ENCODE measurements at regions of chr12 and their contacts with region 1.

Region 1: DNA sequence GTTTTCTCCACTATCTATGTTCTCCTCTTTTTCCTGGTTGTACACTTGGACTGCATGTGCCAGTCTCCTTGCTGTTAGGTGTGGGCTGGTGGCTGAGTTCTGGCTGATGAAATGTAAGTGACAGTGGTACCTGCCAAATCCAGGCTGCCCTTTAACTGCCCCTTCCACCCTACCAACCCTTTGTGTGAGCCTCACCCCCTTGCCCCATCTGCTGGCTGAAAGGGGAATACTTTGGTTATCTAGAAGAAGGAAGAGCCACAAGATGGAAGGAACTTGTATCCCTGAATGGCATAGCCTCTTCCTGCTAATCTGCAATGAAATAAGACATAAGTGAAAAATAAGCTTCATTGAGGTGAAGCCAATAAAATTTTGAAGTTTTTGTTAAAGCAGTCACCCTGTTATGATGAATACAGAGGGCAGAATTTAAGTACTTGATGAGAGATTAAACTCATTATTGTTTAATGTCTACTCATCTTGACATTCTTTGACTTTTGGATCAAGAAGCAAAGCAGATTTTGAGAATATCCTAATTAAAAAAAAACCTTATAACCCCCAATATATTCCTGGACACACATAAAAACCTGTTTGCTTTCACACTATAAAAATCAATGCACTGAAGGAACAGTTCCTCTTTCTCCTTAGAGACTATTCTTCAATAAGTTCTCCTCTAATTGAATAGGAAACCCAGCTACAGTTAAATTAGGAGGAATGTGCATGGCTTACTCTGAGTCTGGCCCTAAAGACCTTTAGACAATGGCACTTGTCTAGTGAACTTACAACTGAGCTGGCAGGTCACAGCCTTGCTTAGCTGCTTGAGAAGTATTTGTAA is 262.6 kb upstream of the BTG1 start:
- DNase-seq: peak; percentile 38
- CTCF ChIP-seq: peak; percentile 53

Region 2: GRCh38 chr12:92121826-92122225 is 286.5 kb before region 1 on chr12:
- CTCF ChIA-PET with region 1: no interaction called
- POLR2A ChIA-PET with region 1: no interaction called
- DNase-seq: no peak
- CTCF ChIP-seq: no peak

Region 3: GRCh38 chr12:92363295-92364146 is 44.8 kb before region 1 on chr12:
- CTCF ChIA-PET with region 1: interaction called, 17 read pairs
- POLR2A ChIA-PET with region 1: interaction called, 8 read pairs
- DNase-seq: peak; percentile 61
- CTCF ChIP-seq: no peak

Region 4: DNA sequence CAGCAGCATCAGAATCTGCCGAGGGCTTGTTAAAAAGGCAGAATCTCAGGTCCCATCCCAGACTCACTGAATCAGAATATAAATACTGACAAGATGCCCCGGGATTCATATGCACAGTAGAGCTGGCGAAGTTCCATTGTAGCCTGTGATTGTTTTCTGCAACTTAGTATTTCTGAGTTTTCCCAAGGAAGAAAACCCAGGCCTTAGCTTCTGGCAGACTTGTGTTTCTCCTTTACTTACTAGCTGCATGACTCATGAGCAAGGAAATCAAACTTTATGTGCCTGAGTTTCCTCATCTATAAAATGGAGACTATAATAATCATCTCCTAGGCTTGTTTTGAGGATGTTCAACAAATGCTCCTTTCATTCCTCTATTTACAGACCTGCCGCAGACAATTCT is 16.1 kb after region 1 on chr12:
- CTCF ChIA-PET with region 1: interaction called, 93 read pairs
- POLR2A ChIA-PET with region 1: no interaction called
- DNase-seq: no peak
- CTCF ChIP-seq: no peak

Region 5: GRCh38 chr12:92431146-92431545 is 22.9 kb after region 1 on chr12:
- CTCF ChIA-PET with region 1: interaction called, 93 read pairs
- POLR2A ChIA-PET with region 1: no interaction called
- DNase-seq: peak; percentile 34
- CTCF ChIP-seq: peak; percentile 34

Region 6: DNA sequence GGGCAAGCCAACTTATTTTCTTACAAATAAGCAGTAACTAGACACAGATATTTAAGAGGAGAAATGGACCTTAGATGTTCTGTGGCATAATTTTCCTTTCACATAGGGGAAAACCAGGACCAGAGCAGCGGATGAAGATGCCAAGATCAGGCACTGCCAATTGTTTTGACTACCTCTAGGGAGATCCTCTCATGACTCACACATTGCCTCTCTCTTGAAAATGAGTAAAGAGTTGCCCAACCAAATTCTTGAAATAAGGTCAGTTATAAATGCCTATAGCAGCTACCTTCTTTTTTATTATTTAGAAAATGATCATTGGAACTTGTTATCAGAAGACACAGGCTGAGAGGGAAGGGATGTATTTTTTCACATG is 31.1 kb after region 1 on chr12:
- CTCF ChIA-PET with region 1: interaction called, 11 read pairs
- POLR2A ChIA-PET with region 1: no interaction called
- DNase-seq: no peak
- CTCF ChIP-seq: no peak

Region 7: DNA sequence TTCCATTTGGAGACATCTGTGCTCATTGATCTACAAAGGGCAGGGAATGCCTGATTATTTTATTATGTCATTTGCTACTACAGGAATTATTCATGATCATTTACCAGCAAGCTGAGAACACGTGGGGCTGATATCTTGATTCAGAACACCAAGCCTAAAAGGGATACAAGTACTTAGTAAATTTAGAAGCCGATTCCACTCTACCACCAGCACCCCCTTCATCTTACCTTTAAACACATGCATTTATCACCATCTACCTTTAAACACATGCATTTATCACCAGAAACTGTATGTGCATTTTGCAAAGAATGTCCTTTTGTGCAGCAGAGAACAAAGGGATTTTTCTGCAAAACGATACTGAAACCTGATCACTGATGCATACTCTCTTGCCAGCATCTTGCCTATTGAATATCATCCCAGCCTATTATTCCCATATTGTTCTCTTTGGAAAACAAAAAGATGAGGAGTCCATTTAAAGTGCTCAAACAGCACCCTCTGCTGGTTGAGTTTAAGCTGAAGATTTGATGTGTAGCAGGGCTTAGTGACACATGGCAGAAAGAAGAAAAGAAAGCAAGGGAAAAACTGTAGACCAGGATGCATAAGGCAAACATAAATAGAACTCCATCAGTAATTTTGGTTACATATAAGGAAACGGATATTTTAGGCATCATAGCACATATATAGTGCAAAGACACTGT is 161.9 kb after region 1 on chr12:
- CTCF ChIA-PET with region 1: interaction called, 13 read pairs
- POLR2A ChIA-PET with region 1: no interaction called
- DNase-seq: peak; percentile 47
- CTCF ChIP-seq: peak; percentile 73

Measured in GM10248 (cell line).